ENCODE measurements at regions of chrX and their contacts with region 1.

Region 1: DNA sequence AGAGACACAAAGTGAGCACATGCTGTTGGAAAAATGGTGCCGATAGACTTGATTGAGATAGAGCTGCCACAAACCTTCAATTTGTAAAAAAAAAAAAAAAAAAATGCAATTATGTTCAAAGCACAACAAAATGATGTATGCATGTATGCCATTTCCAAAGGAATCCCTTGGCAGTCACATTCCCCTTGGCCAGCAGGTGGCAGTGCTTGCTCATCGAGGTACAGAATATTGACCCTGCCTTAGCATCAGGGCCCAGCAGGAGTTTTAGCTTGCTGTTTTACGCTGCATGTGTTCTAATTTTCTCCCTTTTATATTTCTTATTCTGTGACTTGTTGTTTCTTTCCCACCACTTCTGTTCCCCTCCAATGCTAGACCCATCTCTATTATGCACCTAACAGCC is 34.5 kb upstream of the CYBB start:
- DNase-seq: peak; percentile 73
- H3K4me3 Mint-ChIP-seq: no peak overlapping the region
- H3K27ac Mint-ChIP-seq: no peak overlapping the region
- H3K4me1 Mint-ChIP-seq: no peaks in the 10 kb centered on the region
- H3K27me3 Mint-ChIP-seq: peaks cover 56% of the 10 kb centered on the region
- CTCF ChIP-seq: peak; percentile 75

Region 2: DNA sequence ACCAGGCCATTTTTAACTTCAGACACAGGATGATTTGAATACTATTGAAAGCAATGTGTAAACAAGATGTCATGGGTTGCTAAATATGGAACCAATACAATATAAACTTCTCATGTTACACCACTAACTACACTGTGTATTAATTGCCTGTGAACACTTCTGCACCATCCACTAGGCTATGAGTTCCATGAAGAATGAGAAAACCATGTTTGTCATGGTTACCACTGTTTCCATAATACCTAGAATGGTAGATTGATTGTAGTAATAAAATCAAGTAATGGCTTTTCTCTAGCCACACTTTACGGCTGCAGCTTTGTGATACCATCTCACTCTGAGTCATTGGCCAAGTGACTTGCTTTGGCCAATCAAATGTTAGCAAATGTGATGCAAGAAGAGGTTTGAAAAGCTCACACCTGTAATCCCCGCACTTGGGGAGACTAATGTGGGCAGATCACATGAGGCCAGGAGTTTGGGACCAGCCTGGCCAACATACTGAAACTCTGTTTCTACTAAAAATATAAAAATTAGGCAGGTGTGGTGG is 14.6 kb after region 1 on chrX:
- CTCF ChIA-PET with region 1: interaction called, 22 read pairs
- POLR2A ChIA-PET with region 1: no interaction called
- intact Hi-C with region 1: no loop called
- DNase-seq: no peak
- H3K4me3 Mint-ChIP-seq: no peak overlapping the region
- H3K27ac Mint-ChIP-seq: no peak overlapping the region
- H3K4me1 Mint-ChIP-seq: no peaks in the 10 kb centered on the region
- H3K27me3 Mint-ChIP-seq: peaks cover 60% of the 10 kb centered on the region
- CTCF ChIP-seq: no peak

Region 3: DNA sequence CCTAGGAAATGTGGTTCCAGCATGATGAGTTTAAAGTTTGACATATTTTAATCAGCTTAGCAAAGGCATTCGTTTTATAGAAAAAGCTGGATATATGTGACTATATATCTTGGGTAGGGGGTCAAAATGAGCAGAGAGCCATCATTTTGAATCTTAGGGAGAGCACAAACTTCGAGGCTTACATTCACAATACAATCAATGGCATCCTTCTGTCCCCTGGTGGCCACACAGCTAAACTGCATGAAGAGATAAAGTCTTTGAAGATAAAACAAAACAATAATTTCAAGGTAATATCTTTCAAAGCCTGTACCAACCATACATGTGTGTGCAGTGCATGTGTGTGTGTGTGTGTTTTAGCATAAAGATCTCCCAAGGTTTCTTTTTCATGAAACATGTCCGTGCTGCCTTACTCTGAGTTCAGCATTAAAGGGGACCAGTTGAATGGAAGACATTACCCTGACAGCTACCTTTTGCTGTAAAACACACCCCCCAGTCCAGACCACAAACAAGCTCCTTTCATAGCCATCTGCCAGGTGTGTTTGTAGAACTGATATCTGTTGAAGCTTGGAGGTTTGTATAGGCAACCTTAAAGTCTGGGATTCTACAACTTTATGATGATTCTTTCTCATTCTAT is 80.0 kb after region 1 on chrX:
- CTCF ChIA-PET with region 1: interaction called, 116 read pairs
- POLR2A ChIA-PET with region 1: interaction called, 3 read pairs
- intact Hi-C with region 1: loop called (anchors 1 kb)
- DNase-seq: peak; percentile 59
- H3K4me3 Mint-ChIP-seq: no peak overlapping the region
- H3K27ac Mint-ChIP-seq: no peak overlapping the region
- H3K4me1 Mint-ChIP-seq: no peaks in the 10 kb centered on the region
- H3K27me3 Mint-ChIP-seq: peaks cover 63% of the 10 kb centered on the region
- CTCF ChIP-seq: peak; percentile 88

Region 4: GRCh38 chrX:38166478-38167083 is 421.2 kb after region 1 on chrX:
- CTCF ChIA-PET with region 1: interaction called, 18 read pairs
- POLR2A ChIA-PET with region 1: no interaction called
- intact Hi-C with region 1: loop called (anchors 2 kb)
- DNase-seq: peak; percentile 52
- H3K4me3 Mint-ChIP-seq: no peak overlapping the region
- H3K27ac Mint-ChIP-seq: no peak overlapping the region
- H3K4me1 Mint-ChIP-seq: no peaks in the 10 kb centered on the region
- H3K27me3 Mint-ChIP-seq: peaks cover 47% of the 10 kb centered on the region
- CTCF ChIP-seq: peak; percentile 49